Gastrocnemius medialis (tissue), 4 donors: ENCODE measurements at regions of chr4 and their contacts with region 1.

Region 1: DNA sequence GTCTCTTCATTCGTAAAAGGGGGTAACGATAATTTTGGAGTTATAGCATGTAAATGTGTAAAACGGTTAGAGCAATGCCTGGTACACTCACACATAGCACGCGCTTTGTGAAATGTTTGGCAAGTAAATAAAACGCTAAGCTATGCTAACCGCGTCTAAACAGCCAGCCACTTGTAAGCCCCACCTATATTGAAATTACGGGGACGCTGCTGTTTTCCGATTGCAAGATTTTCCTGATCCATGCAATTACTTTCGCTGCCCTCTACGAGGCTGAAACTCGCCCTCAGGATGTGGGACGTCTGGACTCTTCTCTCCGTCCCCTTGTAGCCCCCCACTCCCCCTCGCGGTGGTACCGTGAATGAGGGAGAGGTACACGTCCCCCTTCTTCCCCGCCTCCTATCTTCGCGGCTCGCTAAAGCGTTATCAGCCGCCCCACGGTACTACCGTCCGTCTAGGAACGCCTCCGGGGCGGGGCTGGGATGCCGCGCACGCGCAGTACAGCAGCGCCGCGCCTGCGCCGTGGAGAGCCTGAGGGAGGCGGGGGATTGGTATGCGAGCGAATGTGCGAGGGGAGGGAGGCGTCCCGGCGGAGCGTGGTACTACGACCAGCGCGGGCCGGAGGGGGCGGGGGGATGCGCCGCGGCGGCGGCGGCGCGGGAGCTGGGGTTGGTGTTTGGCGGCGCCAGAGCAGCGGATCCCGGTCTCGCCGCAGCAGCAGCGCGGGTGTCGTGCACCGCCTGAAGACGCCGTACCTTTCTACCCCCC is at the start of gene STIM2:
- DNase-seq: peak; percentile 93 to 95
- ATAC-seq: peak; percentile 81 to 87
- H3K4me3 ChIP-seq: peak within 1 kb of the TSS; percentile 76 to 84 (median 78)
- H3K27ac ChIP-seq: peak within 1 kb of the TSS; percentile 78 to 90 (median 86)
- H3K4me1 ChIP-seq: peaks cover 47 to 48% of the 10 kb centered on the region in 2 donors
- H3K27me3 ChIP-seq: no peaks in the 10 kb centered on the region
- CTCF ChIP-seq: peak; percentile 6 to 52 (median 38)
- POLR2A ChIP-seq: peak; percentile 76 to 85
- total RNA-seq, gene STIM2: 3.9 to 7.6 (median 4.9) TPM

Region 2: GRCh38 chr4:25159884-25160713 is 1700.2 kb before region 1 on chr4 and contains the start of gene SEPSECS:
- in situ Hi-C with region 1: no loop called
- intact Hi-C with region 1: loop called (anchors 5 kb)
- DNase-seq: peak; percentile 96 to 97
- ATAC-seq: peak; percentile 97
- H3K4me3 ChIP-seq: peak within 1 kb of the TSS; percentile 78 to 98 (median 82)
- H3K27ac ChIP-seq: peak within 1 kb of the TSS; percentile 91 to 96 (median 93)
- H3K4me1 ChIP-seq: peaks cover 22 to 23% of the 10 kb centered on the region in 2 donors
- H3K27me3 ChIP-seq: no peaks in the 10 kb centered on the region
- CTCF ChIP-seq: no peak
- POLR2A ChIP-seq: peak in 1 of 2 donors; percentile 59
- total RNA-seq, gene SEPSECS: 3.9 to 6.7 (median 4.7) TPM

Region 3: DNA sequence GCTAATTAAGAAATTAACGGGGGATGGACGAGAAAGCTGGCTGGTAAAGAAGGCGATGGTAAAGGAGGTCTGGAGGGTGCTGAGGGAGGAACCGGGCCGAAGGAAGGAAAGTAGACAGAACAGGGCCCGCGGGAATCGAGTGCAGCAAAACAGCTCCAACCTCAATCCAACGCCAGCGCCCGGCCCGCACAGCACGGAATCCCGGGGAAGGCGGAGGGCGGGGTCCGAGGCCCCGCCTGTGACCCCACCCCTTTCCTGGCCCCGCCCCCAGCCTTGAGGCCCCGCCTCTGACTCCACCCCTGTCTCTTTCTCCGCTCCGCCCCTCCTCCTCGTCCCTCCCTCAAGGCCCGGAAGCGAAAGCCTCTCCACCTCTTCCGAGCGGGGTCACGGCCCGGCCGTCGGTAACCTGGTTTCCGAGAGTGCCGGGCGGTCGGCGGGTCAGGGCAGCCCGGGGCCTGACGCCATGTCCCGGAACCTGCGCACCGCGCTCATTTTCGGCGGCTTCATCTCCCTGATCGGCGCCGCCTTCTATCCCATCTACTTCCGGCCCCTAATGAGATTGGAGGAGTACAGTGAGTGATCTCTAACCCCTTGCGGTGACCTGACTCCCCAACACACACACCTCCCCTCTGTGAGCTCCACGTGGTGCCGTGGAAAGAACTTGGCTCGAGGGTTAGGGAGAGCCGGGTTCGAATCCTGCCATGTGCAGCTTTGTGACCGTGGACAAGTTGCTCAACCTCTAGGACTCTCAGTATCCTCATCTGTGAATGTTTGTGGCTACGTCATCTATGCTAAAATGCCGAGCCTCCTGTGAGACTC is 946.3 kb before region 1 on chr4 and contains the start of gene SMIM20:
- in situ Hi-C with region 1: loop called in 3 of 4 experiments (anchors 25 kb)
- intact Hi-C with region 1: loop called (anchors 2 kb)
- DNase-seq: peak; percentile 90 to 93
- ATAC-seq: peak; percentile 96 to 97
- H3K4me3 ChIP-seq: peak within 1 kb of the TSS; percentile 72 to 83 (median 76)
- H3K27ac ChIP-seq: peak within 1 kb of the TSS; percentile 87 to 97 (median 90)
- H3K4me1 ChIP-seq: peaks cover 14 to 15% of the 10 kb centered on the region in 2 donors
- H3K27me3 ChIP-seq: no peaks in the 10 kb centered on the region
- CTCF ChIP-seq: no peak
- POLR2A ChIP-seq: peak; percentile 77 to 78
- total RNA-seq, gene SMIM20: 36.4 to 59.4 (median 48.3) TPM

Region 4: GRCh38 chr4:26583865-26584652 is 276.3 kb before region 1 on chr4 and contains the start of gene TBC1D19:
- in situ Hi-C with region 1: loop called in 2 of 4 experiments (anchors 25 kb)
- intact Hi-C with region 1: loop called (anchors 2 kb)
- DNase-seq: peak; percentile 81 to 82
- ATAC-seq: peak; percentile 99 to 100
- H3K4me3 ChIP-seq: peak within 1 kb of the TSS; percentile 53 to 96 (median 67)
- H3K27ac ChIP-seq: peak within 1 kb of the TSS; percentile 64 to 84 (median 69)
- H3K4me1 ChIP-seq: peaks cover 6 to 9% of the 10 kb centered on the region in 2 donors
- H3K27me3 ChIP-seq: no peaks in the 10 kb centered on the region
- CTCF ChIP-seq: no peak
- POLR2A ChIP-seq: peak; percentile 23 to 35
- total RNA-seq, gene TBC1D19: 6.5 to 7.0 (median 6.8) TPM

Region 5: GRCh38 chr4:26753617-26754016 is 106.7 kb before region 1 on chr4:
- in situ Hi-C with region 1: no loop called
- intact Hi-C with region 1: loop called (anchors 2 kb)
- DNase-seq: peak; percentile 71 to 78
- ATAC-seq: peak; percentile 99
- H3K4me3 ChIP-seq: no peak overlapping the region
- H3K27ac ChIP-seq: peak overlapping the region; percentile 50 to 67 (median 61)
- H3K4me1 ChIP-seq: peaks cover 24 to 45% of the 10 kb centered on the region in 2 donors
- H3K27me3 ChIP-seq: no peaks in the 10 kb centered on the region
- CTCF ChIP-seq: no peak
- POLR2A ChIP-seq: no peak